Caco-2 (cell line): ENCODE measurements at regions of chr22 and their contacts with region 1.

Region 1: DNA sequence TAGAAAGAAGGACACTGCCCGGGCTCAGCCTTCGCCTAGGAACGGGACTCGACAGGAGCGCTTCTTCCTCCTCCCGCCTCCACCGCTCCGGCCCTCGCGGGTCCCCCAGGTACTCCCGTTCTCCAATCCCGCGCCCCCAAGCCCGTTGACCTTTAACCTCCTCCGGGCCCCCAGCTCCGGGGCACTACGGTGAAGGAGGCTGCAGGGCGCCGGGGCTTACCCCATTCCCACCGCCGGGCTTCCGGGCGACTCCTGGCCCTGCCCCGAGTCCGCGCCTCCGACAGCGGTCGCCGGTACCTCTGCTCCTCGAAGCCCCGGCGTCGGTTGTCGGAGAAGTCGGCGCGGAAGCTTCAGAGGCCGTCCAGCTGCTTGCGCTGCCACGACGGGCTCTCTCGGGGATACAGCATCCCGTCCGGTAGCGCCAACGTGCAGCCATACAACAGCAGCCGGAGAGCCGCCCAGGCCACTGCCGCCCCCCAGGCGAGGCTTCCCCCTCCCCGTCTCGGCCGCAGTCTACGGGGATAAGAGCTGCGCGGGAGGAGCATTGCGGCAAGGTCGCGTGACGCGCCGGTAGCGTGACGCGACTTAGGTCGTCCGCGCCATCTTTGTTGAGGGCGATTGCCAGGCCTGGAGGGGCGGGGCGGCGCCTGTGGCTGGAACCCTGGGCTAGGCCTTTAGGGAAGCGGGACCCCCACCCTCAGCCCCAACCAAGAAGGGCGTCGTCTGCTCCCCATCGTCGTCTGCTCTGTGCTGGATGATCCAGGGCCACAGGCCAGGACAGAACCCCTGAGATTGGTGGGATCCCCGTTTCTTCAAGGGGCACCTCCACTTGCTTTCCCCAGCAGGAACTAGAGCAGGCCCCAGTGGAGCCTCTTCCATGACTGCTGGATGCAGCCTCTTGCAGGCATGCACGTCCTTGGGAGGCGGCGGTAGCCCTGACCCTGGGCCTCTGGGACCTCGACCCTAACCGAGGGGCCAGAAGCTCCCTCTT is 26.3 kb downstream of the RGL4 start:
- DNase-seq: peak; percentile 84 to 89
- H3K4me3 ChIP-seq: peak overlapping the region; percentile 73
- H3K4me3 Mint-ChIP-seq: peak overlapping the region; percentile 74
- H3K27ac Mint-ChIP-seq: peak overlapping the region; percentile 85
- H3K4me1 ChIP-seq: peaks cover 4% of the 10 kb centered on the region; the same call in 1 of the 2 replicates
- H3K4me1 Mint-ChIP-seq: no peaks in the 10 kb centered on the region
- H3K27me3 ChIP-seq: no peaks in the 10 kb centered on the region
- H3K27me3 Mint-ChIP-seq: no peaks in the 10 kb centered on the region
- CTCF ChIP-seq: no peak

Region 2: GRCh38 chr22:23621082-23621780 is 95.9 kb before region 1 on chr22:
- CTCF ChIA-PET with region 1: no interaction called
- POLR2A ChIA-PET with region 1: interaction called, 3 read pairs
- intact Hi-C with region 1: loop called (anchors 2 kb)
- DNase-seq: peak; percentile 81 to 84
- H3K4me3 ChIP-seq: no peak overlapping the region
- H3K4me3 Mint-ChIP-seq: peak overlapping the region; percentile 56
- H3K27ac Mint-ChIP-seq: peak overlapping the region; percentile 97
- H3K4me1 ChIP-seq: peaks cover 56% of the 10 kb centered on the region
- H3K4me1 Mint-ChIP-seq: peaks cover 54% of the 10 kb centered on the region
- H3K27me3 ChIP-seq: no peaks in the 10 kb centered on the region
- H3K27me3 Mint-ChIP-seq: no peaks in the 10 kb centered on the region
- CTCF ChIP-seq: no peak

Region 3: DNA sequence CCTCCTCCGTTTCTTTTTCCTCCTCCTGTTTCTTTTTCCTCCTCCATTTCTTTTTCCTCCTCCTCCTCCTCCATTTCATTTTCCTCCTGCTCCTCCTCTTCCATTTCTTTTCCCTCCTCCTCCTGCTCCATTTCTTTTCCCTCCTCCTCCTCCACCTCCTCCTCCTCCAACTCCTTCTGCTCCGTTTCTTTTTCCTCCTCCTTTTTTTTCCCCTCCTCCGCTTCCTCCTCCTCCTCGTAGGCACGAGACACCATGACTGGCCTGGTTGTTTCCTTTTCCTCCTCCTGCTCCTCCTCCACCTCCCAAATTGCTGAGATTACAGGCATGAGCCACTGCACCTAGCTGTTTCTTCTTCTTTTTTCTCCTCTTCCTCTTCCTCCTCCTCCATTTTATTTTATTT is 59.4 kb before region 1 on chr22:
- CTCF ChIA-PET with region 1: no interaction called
- POLR2A ChIA-PET with region 1: no interaction called
- intact Hi-C with region 1: no loop called
- DNase-seq: no peak
- H3K4me3 ChIP-seq: no peak overlapping the region
- H3K4me3 Mint-ChIP-seq: no peak overlapping the region
- H3K27ac Mint-ChIP-seq: no peak overlapping the region
- H3K4me1 ChIP-seq: no peaks in the 10 kb centered on the region
- H3K4me1 Mint-ChIP-seq: no peaks in the 10 kb centered on the region
- H3K27me3 ChIP-seq: no peaks in the 10 kb centered on the region
- H3K27me3 Mint-ChIP-seq: no peaks in the 10 kb centered on the region
- CTCF ChIP-seq: no peak

Region 4: GRCh38 chr22:23675492-23676415 is 41.4 kb before region 1 on chr22:
- CTCF ChIA-PET with region 1: no interaction called
- POLR2A ChIA-PET with region 1: no interaction called
- intact Hi-C with region 1: no loop called
- DNase-seq: peak in 1 of 2 experiments; percentile 57
- H3K4me3 ChIP-seq: no peak overlapping the region
- H3K4me3 Mint-ChIP-seq: no peak overlapping the region
- H3K27ac Mint-ChIP-seq: peak overlapping the region; percentile 42
- H3K4me1 ChIP-seq: 0 out of 2 replicates have a peak, but pooled peaks cover 3% of the 10 kb centered on the region
- H3K4me1 Mint-ChIP-seq: no peaks in the 10 kb centered on the region
- H3K27me3 ChIP-seq: no peaks in the 10 kb centered on the region
- H3K27me3 Mint-ChIP-seq: no peaks in the 10 kb centered on the region
- CTCF ChIP-seq: no peak

Region 5: DNA sequence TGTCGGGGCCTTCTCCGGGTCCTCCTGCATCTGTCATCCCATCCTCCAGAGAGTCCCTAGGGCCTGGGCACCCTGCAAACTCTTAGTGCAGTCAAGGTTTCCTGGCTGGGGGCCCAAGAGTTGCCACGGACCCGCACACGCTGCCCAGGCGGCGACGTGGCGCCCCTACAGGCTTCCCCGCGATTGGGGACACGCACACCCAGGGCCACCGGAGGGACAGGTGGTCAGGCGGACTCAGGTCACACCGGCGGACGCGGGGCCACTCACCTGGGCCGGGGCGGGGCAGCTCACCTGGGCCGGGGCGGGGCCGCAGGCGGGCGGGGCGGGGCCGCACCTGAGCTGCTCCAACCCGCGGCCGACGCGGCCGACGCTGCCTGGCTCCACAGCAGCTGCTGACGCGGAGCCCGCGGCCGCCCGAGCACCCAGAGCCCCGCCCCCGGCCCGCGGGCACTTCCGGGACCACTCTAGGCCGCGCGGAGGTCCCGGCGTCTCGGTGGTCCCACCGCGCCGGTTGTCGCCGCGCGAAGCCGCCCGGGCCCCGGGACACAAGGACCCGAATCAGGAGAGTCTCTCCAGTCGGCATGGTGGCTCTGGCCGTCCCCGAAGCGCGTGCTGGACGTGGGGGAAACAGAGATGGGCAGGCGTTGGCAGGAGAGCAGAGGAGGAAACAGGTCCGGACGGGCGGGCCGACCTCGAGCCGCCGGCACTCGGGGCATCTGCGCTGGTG is 33.8 kb after region 1 on chr22 and contains the start of gene ZNF70:
- CTCF ChIA-PET with region 1: interaction called, 4 read pairs
- POLR2A ChIA-PET with region 1: no interaction called
- intact Hi-C with region 1: loop called (anchors 1 kb)
- DNase-seq: peak; percentile 92 to 93
- H3K4me3 ChIP-seq: peak within 1 kb of the TSS; percentile 85
- H3K4me3 Mint-ChIP-seq: peak within 1 kb of the TSS; percentile 89
- H3K27ac Mint-ChIP-seq: peak within 1 kb of the TSS; percentile 77
- H3K4me1 ChIP-seq: 0 out of 2 replicates have a peak, but pooled peaks cover 3% of the 10 kb centered on the region
- H3K4me1 Mint-ChIP-seq: peaks cover 11% of the 10 kb centered on the region
- H3K27me3 ChIP-seq: no peaks in the 10 kb centered on the region
- H3K27me3 Mint-ChIP-seq: no peaks in the 10 kb centered on the region
- CTCF ChIP-seq: peak in 1 of 2 experiments; percentile 61
- total RNA-seq, gene ZNF70: 5.4 and 5.8 TPM in 2 replicates